ENCODE measurements at regions of chr11 and their contacts with region 1.

Region 1: GRCh38 chr11:45371251-45372115 is 85.3 kb upstream of the SYT13 start:
- DNase-seq: peak; percentile 71
- ATAC-seq: peak; percentile 49
- H3K4me3 ChIP-seq: peak overlapping the region in 1 of 5 experiments; percentile 5
- H3K4me3 Mint-ChIP-seq: peak overlapping the region; percentile 38
- H3K27ac ChIP-seq: no peak overlapping the region
- H3K27ac Mint-ChIP-seq: no peak overlapping the region
- H3K4me1 ChIP-seq: peaks cover 20 to 24% of the 10 kb centered on the region in 2 donors
- H3K4me1 Mint-ChIP-seq: peaks cover 23% of the 10 kb centered on the region
- H3K27me3 ChIP-seq: peaks cover 0 to 49% (median 15%) of the 10 kb centered on the region in 4 experiments
- H3K27me3 Mint-ChIP-seq: peaks cover 68% of the 10 kb centered on the region
- CTCF ChIP-seq: peak; percentile 79

Region 2: DNA sequence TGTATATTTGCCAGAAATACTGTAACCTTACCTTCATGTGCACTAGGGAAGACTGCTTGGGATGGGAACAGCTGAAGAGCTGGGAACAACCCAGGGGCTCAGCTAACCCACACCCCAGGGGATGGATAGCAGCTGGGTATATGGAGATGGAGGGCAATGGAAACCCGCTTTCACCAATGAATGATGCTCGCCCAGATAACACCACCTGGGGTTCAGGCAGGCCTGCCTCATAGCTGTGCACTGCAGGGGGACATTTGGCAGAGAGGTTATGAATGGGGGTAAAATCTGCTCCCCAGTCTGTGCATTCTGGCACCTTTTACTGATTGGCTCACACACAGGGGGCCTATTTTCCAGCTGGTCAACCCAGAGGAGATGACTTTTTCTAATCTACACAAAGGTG is 123.3 kb after region 1 on chr11:
- CTCF ChIA-PET with region 1: no interaction called
- POLR2A ChIA-PET with region 1: no interaction called
- intact Hi-C with region 1: no loop called
- DNase-seq: no peak
- ATAC-seq: no peak
- H3K4me3 ChIP-seq: no peak overlapping the region
- H3K4me3 Mint-ChIP-seq: no peak overlapping the region
- H3K27ac ChIP-seq: no peak overlapping the region
- H3K27ac Mint-ChIP-seq: no peak overlapping the region
- H3K4me1 ChIP-seq: no peaks in the 10 kb centered on the region
- H3K4me1 Mint-ChIP-seq: no peaks in the 10 kb centered on the region
- H3K27me3 ChIP-seq: peaks cover 0 to under 1% (median 0%) of the 10 kb centered on the region in 4 experiments
- H3K27me3 Mint-ChIP-seq: peaks cover 21% of the 10 kb centered on the region
- CTCF ChIP-seq: no peak

Region 3: GRCh38 chr11:45655347-45655756 is 283.9 kb after region 1 on chr11:
- CTCF ChIA-PET with region 1: interaction called, 30 read pairs
- POLR2A ChIA-PET with region 1: no interaction called
- intact Hi-C with region 1: no loop called
- DNase-seq: peak; percentile 58
- ATAC-seq: no peak
- H3K4me3 ChIP-seq: no peak overlapping the region
- H3K4me3 Mint-ChIP-seq: no peak overlapping the region
- H3K27ac ChIP-seq: no peak overlapping the region
- H3K27ac Mint-ChIP-seq: no peak overlapping the region
- H3K4me1 ChIP-seq: peaks cover 0 to 3% of the 10 kb centered on the region in 2 donors
- H3K4me1 Mint-ChIP-seq: no peaks in the 10 kb centered on the region
- H3K27me3 ChIP-seq: peaks cover 0 to 18% (median 4%) of the 10 kb centered on the region in 4 experiments
- H3K27me3 Mint-ChIP-seq: peaks cover 47% of the 10 kb centered on the region
- CTCF ChIP-seq: peak; percentile 91